ENCODE measurements at regions of chr20 and their contacts with region 1.

Region 1: DNA sequence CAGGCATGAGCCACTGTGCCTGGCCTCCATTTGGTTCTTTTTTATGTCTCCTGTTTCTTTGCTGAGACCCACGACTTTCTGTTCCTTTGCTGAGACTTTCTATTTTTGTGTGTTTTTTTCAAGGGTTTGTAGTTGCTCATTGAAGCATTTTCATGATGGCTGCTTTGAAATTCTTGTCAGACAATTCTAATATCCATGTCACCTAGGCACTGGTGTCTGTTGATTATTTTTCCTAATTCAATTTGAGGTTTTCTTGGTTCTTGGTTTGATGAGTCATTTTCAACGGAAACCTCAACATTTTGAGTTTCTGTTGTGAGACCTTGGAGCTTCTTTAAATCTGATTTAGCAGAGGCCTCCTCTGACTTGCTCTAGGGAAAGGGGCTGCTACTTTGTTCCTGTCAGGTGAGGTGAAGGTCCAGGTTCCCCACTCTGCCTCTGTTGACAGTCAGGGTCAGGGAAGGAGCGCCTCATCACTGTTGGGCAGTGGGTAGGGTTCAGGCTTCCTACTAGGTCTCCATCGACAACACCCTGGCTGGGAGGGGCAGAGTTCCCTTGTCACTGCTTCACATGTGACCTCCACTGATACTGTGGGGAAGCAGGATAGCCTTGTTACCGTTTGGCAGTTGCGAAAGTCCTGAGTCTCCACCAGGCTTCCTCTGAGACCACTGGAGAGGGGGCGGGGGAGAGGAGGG is 67.2 kb upstream of the RNF24 start:
- DNase-seq: no peak
- H3K4me3 Mint-ChIP-seq: peak overlapping the region; percentile 14
- H3K27ac Mint-ChIP-seq: no peak overlapping the region
- H3K4me1 Mint-ChIP-seq: peaks cover 24% of the 10 kb centered on the region
- H3K27me3 Mint-ChIP-seq: peaks cover 24% of the 10 kb centered on the region
- CTCF ChIP-seq: no peak

Region 2: DNA sequence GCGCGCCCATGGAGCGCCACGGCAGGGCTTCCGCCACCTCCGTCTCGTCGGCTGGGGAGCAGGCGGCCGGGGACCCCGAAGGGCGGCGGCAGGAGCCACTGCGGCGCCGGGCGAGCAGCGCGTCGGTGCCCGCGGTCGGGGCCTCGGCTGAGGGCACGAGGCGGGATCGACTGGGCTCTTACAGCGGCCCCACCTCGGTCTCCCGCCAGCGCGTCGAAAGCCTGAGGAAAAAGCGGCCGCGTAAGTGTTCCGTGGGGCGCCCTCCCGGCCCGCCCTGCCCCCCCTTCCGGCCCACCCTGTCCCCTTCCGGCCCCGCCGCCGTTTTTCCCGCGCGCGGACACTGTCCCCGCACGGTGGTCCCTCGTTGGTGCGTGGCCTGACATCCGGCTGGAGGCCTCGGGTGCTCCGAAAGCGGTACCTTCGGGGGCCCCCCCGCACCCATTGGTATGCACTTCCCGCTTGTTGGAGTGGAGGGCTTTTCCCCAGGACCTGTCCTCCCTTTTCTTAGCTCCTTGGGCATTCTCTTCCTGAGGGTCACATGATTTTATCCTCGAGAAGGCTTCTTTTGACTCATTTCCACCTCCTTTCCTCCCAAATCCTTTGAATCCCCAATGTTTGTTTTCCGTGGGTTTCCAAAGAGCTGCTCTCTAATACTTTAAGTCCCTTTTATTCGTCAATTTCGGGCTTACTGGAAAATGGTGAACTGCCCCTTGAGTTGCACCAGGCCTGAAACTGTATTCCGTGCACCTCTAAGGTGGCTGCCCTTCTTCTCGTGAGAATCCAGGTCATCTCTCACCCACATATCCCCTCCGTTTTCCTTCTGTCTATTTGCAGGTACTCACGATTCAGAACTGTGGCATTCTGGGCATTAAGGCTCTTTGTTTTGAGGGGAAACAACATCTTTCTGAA is 192.8 kb before region 1 on chr20:
- CTCF ChIA-PET with region 1: interaction called, 4 read pairs
- intact Hi-C with region 1: loop called (anchors 10 kb)
- DNase-seq: peak; percentile 11
- H3K4me3 Mint-ChIP-seq: peak overlapping the region; percentile 98
- H3K27ac Mint-ChIP-seq: peak overlapping the region; percentile 95
- H3K4me1 Mint-ChIP-seq: peaks cover 12% of the 10 kb centered on the region
- H3K27me3 Mint-ChIP-seq: no peaks in the 10 kb centered on the region
- CTCF ChIP-seq: no peak

Region 3: DNA sequence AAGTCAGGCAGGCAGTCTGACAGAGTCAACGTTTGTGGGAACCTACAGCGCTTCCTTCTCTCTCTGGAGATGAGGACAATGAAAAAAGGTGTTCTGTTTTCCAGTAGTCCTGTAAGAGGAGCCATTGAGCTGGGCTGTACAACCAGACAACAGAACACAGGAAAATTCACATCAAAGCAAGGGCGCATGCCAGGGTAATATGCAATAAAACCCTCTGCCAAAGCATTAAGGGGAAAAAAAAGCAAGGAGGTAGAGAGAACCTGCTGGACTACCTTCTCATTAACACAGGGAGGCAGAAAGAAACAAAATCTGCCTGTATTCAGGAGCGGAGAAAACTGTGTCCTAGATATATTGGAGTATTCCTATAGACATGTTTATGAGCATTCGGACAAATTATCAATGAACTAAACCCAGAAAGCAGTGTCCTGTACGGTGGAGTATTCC is 68.5 kb before region 1 on chr20:
- CTCF ChIA-PET with region 1: interaction called, 8 read pairs
- intact Hi-C with region 1: loop called (anchors 1 kb)
- DNase-seq: peak; percentile 60
- H3K4me3 Mint-ChIP-seq: peak overlapping the region; percentile 72
- H3K27ac Mint-ChIP-seq: peak overlapping the region; percentile 59
- H3K4me1 Mint-ChIP-seq: peaks cover 48% of the 10 kb centered on the region
- H3K27me3 Mint-ChIP-seq: peaks cover 6% of the 10 kb centered on the region
- CTCF ChIP-seq: peak; percentile 42